ENCODE measurements at regions of chr2 and their contacts with region 1.

Region 1: GRCh38 chr2:163475815-163476214 is 260.0 kb downstream of the FIGN start:
- DNase-seq: no peak
- H3K4me3 ChIP-seq: no peak overlapping the region
- H3K27ac ChIP-seq: no peak overlapping the region
- H3K4me1 ChIP-seq: no peaks in the 10 kb centered on the region
- H3K27me3 ChIP-seq: no peaks in the 10 kb centered on the region
- CTCF ChIP-seq: no peak
- POLR2A ChIP-seq: no peak

Region 2: GRCh38 chr2:164260506-164260905 is 784.7 kb after region 1 on chr2:
- intact Hi-C with region 1: loop called (anchors 5 kb)
- DNase-seq: no peak
- H3K4me3 ChIP-seq: no peak overlapping the region
- H3K27ac ChIP-seq: no peak overlapping the region
- H3K4me1 ChIP-seq: no peaks in the 10 kb centered on the region
- H3K27me3 ChIP-seq: no peaks in the 10 kb centered on the region
- CTCF ChIP-seq: no peak
- POLR2A ChIP-seq: no peak